Activated naive CD4-positive, alpha-beta T cell treated with anti-CD3 and anti-CD28 coated beads for 36 hours (primary cell): ENCODE measurements at regions of chr14 and their contacts with region 1.

Region 1: DNA sequence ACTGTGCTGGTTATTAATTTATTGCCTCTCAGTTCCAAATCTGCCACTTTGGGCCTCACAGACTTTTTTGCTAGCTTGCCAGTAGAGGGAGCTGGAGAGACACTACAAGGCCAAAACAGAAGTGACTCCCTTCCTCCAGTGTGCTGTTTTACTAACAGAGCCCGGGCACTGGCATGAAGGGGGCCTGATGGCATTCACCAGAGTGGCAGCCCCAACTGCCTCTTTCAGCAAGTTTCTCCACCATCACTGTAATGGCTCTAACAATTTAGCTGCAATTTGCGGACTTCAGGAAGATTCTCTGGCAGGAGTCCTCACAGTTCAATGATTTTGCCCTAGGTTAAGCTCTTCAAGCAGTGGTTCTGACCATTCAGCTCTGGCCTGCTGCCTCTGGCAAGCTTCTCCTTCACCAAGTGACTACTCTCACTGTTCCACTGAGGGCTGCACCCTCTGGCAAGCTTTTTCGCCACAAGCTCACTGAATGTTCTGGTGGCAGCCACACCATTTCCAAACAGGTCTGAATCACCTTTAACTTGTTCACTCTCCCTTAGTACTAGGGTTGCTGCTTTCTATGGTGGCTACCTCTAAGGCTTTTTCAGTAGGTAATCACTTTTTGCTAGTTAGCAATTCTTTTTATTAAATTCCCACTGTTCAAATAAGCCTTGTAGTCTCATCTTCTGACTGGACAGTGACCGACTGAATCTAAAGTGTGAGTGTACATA is 104.9 kb downstream of the ZC3H14 start:
- DNase-seq: peak; percentile 66
- H3K4me3 Mint-ChIP-seq: no peak overlapping the region
- H3K27ac Mint-ChIP-seq: no peak overlapping the region
- H3K4me1 Mint-ChIP-seq: no peaks in the 10 kb centered on the region
- H3K27me3 Mint-ChIP-seq: no peaks in the 10 kb centered on the region

Region 2: GRCh38 chr14:88492272-88493089 is 175.2 kb before region 1 on chr14:
- CTCF ChIA-PET with region 1: interaction called, 3 read pairs
- intact Hi-C with region 1: loop called (anchors 2 kb)
- DNase-seq: peak; percentile 77
- H3K4me3 Mint-ChIP-seq: no peak overlapping the region
- H3K27ac Mint-ChIP-seq: no peak overlapping the region
- H3K4me1 Mint-ChIP-seq: no peaks in the 10 kb centered on the region
- H3K27me3 Mint-ChIP-seq: no peaks in the 10 kb centered on the region

Region 3: DNA sequence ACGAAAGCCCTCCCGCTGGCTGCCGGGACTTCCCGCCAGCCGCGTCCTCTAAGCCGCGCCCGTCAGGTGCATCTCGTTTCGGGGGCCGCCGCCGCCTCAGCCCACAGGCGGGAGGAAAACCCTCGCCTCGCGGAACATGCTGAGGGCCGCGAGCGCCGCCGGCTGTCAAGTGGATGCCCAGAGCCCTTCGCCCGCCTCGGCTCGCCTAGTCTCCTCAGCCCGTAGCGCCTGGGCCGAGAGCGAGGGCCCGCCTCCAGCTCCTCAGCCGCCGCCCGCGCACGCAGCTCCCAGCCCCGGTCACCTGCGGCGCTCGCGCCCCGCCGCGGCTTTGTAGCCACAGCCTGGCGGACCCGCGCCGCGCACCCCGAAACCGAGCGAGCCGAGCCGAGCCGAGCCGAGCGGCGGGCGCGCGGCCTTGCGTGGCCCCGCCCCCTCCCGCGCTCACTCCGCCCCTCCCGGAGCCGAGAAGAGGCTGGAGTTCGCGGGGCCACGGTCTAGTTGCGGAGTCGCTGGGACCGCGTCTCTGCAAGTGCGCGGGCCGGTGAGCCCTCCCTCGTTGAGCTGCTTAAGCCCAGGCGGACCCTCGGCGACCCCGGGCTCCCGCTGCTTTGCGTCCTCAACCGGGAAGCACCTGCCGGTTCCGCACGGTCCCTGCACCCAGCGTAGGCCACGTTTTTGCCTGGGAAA is 125.0 kb after region 1 on chr14 and contains the start of gene EML5:
- CTCF ChIA-PET with region 1: interaction called, 6 read pairs
- intact Hi-C with region 1: loop called (anchors 2 kb)
- DNase-seq: peak; percentile 86
- H3K4me3 Mint-ChIP-seq: peak within 1 kb of the TSS; percentile 88
- H3K27ac Mint-ChIP-seq: peak within 1 kb of the TSS; percentile 71
- H3K4me1 Mint-ChIP-seq: peaks cover 18% of the 10 kb centered on the region
- H3K27me3 Mint-ChIP-seq: no peaks in the 10 kb centered on the region
- total RNA-seq, gene EML5: 3.7 to 3.8 TPM

Region 4: GRCh38 chr14:88868558-88869159 is 200.9 kb after region 1 on chr14:
- CTCF ChIA-PET with region 1: interaction called, 9 read pairs
- intact Hi-C with region 1: loop called (anchors 1 kb)
- DNase-seq: no peak
- H3K4me3 Mint-ChIP-seq: no peak overlapping the region
- H3K27ac Mint-ChIP-seq: no peak overlapping the region
- H3K4me1 Mint-ChIP-seq: no peaks in the 10 kb centered on the region
- H3K27me3 Mint-ChIP-seq: no peaks in the 10 kb centered on the region

Region 5: GRCh38 chr14:89915114-89915878 is 1247.6 kb after region 1 on chr14:
- CTCF ChIA-PET with region 1: no interaction called
- intact Hi-C with region 1: loop called (anchors 5 kb)
- DNase-seq: peak; percentile 79
- H3K4me3 Mint-ChIP-seq: no peak overlapping the region
- H3K27ac Mint-ChIP-seq: no peak overlapping the region
- H3K4me1 Mint-ChIP-seq: no peaks in the 10 kb centered on the region
- H3K27me3 Mint-ChIP-seq: peaks cover 3% of the 10 kb centered on the region